Lower leg skin (tissue), 4 donors: ENCODE measurements at regions of chr11 and their contacts with region 1.

Region 1: GRCh38 chr11:65516135-65516935 is 8.5 kb upstream of the SCYL1 start:
- DNase-seq: no peak
- H3K4me3 ChIP-seq: no peak overlapping the region
- CTCF ChIP-seq: no peak
- POLR2A ChIP-seq: no peak

Region 2: DNA sequence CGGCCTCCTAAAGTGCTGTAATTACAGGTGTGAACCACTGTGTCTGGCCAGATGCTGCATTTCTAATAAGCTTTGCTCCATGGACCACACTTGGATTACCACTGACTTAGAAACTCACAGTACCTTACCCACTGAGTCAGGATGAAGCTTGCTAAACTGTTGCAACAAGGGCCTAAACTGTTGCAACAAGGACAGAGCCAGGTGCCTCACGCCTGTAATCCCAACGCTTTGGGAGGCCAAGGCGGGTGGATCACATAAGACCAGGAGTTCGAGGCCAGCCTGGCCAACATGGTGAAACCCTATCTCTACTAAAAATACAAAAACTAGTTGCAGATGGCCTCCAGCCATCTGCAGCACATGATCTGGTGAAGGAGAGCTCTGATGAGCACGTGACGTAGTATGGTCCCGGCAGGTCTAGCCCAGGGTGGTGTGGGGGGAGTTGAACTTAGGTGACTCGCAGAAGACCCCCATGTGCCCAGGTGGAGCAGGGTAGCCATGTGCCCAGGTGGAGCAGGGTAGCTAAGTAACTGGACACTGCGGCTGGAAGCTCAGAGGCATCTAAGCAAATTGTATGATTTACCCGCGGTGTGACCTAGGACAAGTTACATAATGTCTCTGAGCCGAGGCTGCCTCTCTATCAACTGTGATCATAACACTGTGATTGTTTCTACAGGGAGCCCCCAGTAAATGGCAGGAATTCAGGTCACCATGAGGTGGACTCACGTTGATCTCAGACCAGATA is 142.3 kb before region 1 on chr11:
- intact Hi-C with region 1: loop called (anchors 5 kb)
- DNase-seq: no peak
- H3K4me3 ChIP-seq: no peak overlapping the region
- CTCF ChIP-seq: no peak
- POLR2A ChIP-seq: no peak